ENCODE measurements at regions of chr14 and their contacts with region 1.

Region 1: DNA sequence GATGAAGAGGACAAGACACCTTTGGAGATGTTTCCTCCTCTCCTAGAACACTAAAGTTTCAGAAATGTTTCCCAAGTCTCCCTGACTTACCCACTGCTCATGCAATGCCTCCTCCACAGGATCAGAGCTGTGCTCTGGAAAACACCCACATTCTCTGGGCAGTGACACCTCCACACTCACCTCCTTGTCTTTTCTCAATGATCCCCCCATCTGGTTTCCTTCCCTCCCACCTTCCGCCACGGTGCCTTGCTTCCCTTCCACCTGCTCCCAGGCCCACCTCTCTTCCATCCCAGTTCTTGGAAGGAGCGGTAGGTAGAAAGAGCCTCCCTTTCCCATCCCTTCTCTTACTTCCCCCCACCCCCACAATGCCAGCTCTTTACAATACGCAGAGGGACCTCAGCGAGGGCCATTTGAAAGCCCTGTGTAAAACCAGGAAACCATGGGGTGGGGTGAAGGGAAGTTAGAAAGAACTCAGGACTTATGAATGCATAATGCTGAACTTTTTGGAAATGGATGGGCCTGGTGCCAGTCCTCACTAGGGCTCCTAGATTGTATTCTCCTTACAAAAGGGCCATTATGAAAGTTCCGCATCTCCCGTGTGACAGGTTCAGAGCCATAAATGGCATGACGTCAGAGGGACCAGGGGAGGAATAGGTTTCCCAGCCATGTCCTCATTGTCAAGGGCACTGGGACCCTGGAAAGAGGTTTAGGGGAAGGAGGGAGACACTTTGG is 12.8 kb downstream of the FBLN5 start:
- DNase-seq: no peak
- H3K4me3 ChIP-seq: no peak overlapping the region
- H3K27ac ChIP-seq: no peak overlapping the region
- H3K4me1 ChIP-seq: no peaks in the 10 kb centered on the region
- H3K27me3 ChIP-seq: no peaks in the 10 kb centered on the region
- CTCF ChIP-seq: no peak

Region 2: GRCh38 chr14:91204657-91205056 is 730.1 kb before region 1 on chr14:
- CTCF ChIA-PET with region 1: no interaction called
- POLR2A ChIA-PET with region 1: interaction called, 10 read pairs
- intact Hi-C with region 1: no loop called
- DNase-seq: no peak
- H3K4me3 ChIP-seq: no peak overlapping the region
- H3K27ac ChIP-seq: no peak overlapping the region
- H3K4me1 ChIP-seq: no peaks in the 10 kb centered on the region
- H3K27me3 ChIP-seq: no peaks in the 10 kb centered on the region
- CTCF ChIP-seq: no peak

Measured in A673 (cell line).